A673 (cell line): ENCODE measurements at regions of chr6 and their contacts with region 1.

Region 1: DNA sequence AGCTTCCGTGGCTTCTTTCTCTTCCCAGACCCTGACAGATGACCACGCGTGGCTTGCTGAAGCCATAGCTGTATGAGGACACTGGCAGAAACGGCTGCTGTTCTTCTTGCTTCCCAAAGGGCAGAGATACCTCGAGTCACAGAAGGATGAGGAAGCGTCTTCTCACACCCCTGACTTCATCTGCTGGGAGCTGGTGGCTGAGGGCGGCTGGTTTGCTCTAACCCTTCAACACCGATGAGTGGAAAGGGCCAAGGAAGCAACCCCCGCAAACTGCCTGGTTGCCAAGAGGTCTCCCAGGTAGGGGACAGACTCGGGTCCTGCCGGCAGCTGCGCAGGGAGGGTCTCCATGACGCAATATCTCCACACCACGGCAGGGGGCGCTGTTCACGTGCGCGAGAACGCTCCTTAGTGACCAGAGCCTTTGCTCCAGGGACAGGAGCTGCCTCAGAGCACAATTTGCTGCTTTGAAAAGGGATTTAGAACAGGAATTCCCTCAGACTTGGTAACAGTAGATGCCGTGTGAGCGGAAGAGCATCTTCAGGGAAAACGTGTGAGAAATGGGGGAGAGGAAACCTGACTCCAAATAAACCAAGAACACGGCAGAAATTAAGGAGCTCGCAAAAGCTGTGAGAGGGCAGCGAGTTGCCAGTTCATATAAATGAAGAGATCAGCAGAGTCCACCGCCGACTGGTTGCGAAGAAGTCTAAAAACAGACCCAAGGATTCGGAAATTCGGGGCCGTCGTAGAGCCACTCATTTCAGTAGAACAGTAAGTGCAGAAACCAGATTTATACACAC is 80.2 kb downstream of the ERMARD start:
- DNase-seq: peak; percentile 90
- H3K4me3 ChIP-seq: peak overlapping the region; percentile 29
- H3K27ac ChIP-seq: peak overlapping the region; percentile 83
- H3K4me1 ChIP-seq: peaks cover 23% of the 10 kb centered on the region
- H3K27me3 ChIP-seq: no peaks in the 10 kb centered on the region
- CTCF ChIP-seq: peak; percentile 93

Region 2: GRCh38 chr6:169810066-169810989 is 21.3 kb before region 1 on chr6:
- CTCF ChIA-PET with region 1: no interaction called
- POLR2A ChIA-PET with region 1: no interaction called
- intact Hi-C with region 1: no loop called
- DNase-seq: no peak
- H3K4me3 ChIP-seq: no peak overlapping the region
- H3K27ac ChIP-seq: no peak overlapping the region
- H3K4me1 ChIP-seq: no peaks in the 10 kb centered on the region
- H3K27me3 ChIP-seq: peaks cover 4% of the 10 kb centered on the region
- CTCF ChIP-seq: no peak

Region 3: DNA sequence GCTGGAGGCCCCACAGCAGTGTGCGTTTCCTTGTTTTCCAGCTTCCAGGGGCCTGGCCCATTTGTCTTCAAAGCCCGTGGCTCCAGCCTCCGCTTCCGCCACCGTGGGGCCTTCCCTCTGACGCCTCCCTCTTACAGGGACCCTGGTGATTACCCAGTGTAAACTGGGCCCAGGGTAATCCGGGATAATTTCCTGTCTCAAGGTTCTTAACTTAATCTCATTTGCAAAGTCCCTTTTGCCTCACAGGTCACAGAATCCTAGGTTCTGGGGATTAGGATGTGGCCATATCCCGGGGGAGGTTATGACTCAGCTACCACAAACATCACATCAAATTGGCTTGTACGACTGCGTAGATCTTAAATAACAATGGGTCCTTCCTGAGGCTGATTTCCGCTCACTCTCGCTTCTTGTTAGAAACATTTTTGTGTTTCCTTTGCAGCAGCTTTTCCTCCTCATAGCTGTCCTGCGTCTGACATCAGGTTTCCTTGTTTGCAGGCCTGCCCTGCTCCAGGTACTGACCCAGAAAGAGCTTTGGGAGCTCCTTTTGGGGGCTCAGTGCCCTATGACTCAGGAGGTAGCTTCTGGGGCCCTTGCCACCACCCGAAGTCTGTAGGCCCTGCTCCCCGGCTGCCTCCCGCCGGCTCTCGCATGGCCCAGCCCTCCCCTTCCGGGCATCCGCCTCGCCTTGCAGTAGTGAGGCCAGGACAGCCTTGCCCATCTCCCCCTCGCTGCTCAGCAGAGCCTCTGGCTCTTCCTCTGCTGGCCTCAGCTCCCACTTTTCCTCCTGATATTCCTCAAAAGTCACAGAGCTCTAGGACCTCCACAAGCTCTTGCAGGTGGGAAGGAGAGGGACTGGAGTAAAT is 20.2 kb after region 1 on chr6:
- CTCF ChIA-PET with region 1: interaction called, 5 read pairs
- POLR2A ChIA-PET with region 1: interaction called, 4 read pairs
- intact Hi-C with region 1: loop called (anchors 1 kb)
- DNase-seq: peak; percentile 98
- H3K4me3 ChIP-seq: no peak overlapping the region
- H3K27ac ChIP-seq: peak overlapping the region; percentile 95
- H3K4me1 ChIP-seq: peaks cover 29% of the 10 kb centered on the region
- H3K27me3 ChIP-seq: no peaks in the 10 kb centered on the region
- CTCF ChIP-seq: no peak

Region 4: DNA sequence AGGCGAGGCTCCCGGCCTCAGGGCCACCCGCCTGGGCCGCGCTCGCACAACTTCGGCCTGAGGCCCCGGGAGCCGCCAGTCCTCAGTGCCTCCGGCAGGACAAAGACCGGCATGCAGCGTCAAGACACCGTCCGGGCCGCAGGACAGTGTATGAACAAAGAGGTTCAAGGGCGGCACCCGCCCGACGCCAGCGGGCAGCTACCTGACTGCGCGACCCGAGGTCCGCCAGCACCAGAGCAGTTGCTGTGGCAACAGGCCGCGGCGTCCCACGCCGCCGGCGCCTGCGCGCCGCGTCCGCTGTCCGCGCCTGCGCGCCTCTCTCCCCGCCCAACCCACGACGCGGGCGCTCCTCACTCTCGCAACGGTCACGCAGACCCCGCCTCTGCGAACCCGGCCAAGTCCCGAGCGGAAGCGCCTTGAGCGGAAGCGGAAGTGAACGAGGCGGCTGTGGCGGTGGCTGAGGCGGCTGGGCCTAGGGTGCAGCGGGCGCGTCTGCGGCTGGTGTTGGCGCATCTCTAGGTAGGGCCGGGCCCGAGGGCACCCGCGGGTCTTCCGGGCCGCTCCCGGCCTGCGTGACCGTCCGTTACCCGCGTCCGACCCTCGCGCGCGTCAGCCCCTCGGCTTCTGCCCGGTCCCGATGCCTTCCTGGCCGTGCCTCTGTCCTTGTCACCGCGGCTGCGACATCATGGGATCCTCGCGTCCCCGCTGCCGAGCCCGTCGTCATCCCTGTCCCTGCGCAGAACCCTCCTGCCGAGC is 474.9 kb after region 1 on chr6 and contains the start of gene FAM120B:
- CTCF ChIA-PET with region 1: no interaction called
- POLR2A ChIA-PET with region 1: no interaction called
- intact Hi-C with region 1: loop called (anchors 5 kb)
- DNase-seq: peak; percentile 98
- H3K4me3 ChIP-seq: peak within 1 kb of the TSS; percentile 69
- H3K27ac ChIP-seq: peak within 1 kb of the TSS; percentile 88
- H3K4me1 ChIP-seq: peaks cover 21% of the 10 kb centered on the region
- H3K27me3 ChIP-seq: no peaks in the 10 kb centered on the region
- CTCF ChIP-seq: no peak
- total RNA-seq, gene FAM120B: 30.3 and 31.6 TPM in 2 replicates